ENCODE measurements at regions of chr2 and their contacts with region 1.

Region 1: DNA sequence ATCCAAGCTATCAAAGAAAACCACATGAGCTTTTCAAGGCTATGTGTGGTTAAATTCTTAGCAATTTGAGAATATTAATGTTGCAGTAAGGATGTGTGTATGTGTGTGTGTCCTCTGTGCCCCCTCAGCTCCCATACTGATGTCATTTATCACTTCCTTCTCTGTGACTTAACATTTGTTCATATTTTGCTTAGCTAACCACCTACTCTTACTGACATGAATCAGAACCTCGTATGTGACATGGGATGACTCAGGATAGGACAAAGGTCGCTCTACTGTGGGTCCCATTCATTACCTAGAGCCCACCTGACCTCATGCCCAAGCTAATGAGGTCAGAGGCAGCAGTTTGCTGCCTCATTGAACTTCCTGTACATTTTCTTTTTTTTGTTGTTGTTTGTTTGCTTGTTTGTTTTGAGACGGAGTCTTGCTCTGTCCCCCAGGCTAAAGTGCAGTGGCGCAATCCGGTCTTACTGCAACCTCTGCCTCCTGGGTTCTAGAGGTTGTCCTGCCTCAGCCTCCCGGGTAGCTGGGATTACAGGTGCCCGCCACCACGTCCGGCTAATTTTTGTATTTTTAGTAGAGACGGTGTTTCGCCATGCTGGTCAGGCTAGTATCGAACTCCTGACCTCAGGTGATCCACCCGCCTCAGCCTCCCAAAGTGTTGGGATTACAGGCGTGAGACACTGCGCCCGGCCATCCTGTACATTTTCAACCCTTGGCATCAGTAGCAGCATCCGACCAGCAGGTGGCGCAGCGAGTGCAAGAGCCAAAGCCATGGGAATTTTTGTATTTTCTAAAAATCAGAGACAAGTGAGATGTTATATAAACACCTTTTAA is 36.4 kb downstream of the MOGAT1 start:
- DNase-seq: peak; percentile 70 to 94 (median 80)
- ATAC-seq: peak; percentile 85
- H3K4me3 ChIP-seq: no peak overlapping the region
- H3K27ac ChIP-seq: peak overlapping the region in 1 of 2 donors; percentile 37
- H3K4me1 ChIP-seq: peaks cover 7 to 24% of the 10 kb centered on the region in 2 donors
- H3K27me3 ChIP-seq: no peaks in the 10 kb centered on the region
- CTCF ChIP-seq: peak; percentile 94 to 95

Region 2: DNA sequence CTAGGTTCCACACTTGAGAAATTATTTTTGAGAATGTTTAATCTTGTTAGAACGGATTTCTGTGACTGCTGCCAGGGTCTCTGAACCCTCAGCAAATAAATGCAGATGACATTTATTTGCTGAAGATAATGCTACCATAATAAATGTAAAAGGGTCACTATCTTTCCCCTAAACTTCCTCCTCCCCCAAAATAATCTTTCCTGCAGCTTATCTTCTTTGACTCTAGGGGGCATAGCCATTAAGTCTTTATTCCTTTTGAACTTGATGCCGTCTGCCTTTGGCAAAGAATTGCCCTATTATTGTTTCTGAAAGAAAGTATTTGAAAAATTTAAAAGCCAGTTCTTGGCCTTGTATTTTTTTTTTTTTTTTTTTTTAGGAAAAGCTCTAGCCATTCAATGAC is 89.4 kb after region 1 on chr2:
- intact Hi-C with region 1: loop called in 1 of 2 experiments (anchors 10 kb)
- DNase-seq: no peak
- ATAC-seq: peak; percentile 68
- H3K4me3 ChIP-seq: no peak overlapping the region
- H3K27ac ChIP-seq: peak overlapping the region in 1 of 2 donors; percentile 69
- H3K4me1 ChIP-seq: peaks cover 8 to 48% of the 10 kb centered on the region in 2 donors
- H3K27me3 ChIP-seq: no peaks in the 10 kb centered on the region
- CTCF ChIP-seq: peak in 1 of 2 donors; percentile 18

Region 3: DNA sequence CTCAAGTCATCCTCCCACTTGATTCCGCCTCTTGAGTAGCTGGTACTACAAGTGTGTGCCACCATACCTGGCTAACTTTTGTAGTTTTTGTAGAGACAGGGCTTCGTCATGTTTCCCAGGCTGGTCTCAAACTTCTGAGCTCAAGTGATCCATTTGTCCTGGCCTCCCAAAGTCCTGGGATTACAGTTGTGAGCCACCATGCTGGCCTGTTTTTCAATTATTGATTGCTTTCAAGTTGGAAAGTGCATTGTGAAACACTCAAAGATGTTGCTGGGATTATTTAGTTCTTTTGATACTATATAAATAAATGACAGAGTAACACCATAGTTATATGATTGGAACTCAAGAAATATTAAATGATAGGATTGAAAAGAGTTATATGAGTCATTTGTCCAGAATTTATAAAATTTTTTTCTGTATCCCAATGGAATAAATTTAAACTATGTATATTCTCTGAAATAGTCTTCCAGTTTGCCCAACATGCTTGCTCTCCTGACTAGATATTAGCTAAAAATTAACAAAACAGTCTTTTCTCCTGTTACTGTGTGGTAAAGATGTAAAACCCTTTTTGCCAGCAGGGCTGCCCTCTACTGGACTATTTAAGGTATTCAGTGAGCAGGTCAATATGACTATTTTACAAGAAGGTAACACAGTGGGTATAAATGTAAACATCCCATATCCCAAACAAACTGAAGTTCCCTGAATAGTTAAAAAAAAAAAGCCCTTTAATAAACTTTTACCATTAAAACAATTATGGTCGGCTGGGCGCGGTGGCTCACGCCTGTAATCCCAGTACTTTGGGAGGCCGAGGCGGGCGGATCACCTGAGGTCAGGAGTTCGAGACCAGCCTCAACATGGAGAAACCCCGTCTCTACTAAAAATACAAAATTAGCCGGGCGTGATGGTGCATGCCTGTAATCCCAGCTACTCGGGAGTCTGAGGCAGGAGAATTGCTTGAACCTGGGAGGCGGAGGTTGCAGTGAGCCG is 195.6 kb after region 1 on chr2:
- intact Hi-C with region 1: loop called in 1 of 2 experiments (anchors 5 kb)
- DNase-seq: peak in 1 of 4 donors; percentile 55
- ATAC-seq: peak; percentile 82
- H3K4me3 ChIP-seq: no peak overlapping the region
- H3K27ac ChIP-seq: peak overlapping the region in 1 of 2 donors; percentile 55
- H3K4me1 ChIP-seq: peaks cover 0 to 30% of the 10 kb centered on the region in 2 donors
- H3K27me3 ChIP-seq: no peaks in the 10 kb centered on the region
- CTCF ChIP-seq: peak; percentile 50 to 67